OCI-LY7 (cell line): ENCODE measurements at regions of chr11 and their contacts with region 1.

Region 1: DNA sequence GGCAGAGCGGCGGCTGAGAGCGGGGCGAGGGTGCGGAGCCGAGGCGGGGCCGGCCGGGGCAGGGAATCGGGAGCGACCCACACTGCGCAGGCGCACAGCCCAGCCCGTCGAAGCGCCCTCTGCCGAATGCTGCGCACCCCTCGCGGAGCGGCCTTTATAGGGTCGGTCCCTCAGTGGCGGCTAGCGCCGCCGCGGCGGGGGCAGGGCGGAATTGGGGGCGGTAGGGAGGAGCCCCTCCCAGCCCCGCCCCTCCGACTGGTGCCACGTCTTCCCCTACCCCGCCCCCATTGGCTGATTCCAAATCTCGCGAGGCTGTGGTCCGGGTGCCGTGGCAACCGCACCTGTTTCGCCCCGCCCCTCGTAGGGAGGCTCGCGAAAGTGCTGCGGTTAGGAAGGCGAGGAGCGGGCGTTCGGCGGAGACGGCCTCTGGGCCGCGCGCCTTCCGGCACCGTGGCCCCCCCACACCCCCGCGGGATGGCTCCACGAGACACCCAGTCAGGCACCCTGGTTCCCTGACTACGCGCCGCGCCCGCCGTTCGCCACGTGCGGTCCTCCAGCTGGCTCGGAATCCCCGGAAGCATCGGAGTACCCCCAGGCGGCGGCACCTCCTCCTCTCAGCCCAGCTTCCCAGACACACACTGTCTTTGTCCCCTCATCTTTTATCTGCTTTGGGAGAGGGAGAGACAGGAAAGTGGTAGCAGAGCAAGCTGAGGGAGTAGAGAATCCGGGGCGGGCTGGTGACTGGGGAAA is at the start of gene EHD1:
- DNase-seq: peak; percentile 100
- H3K4me3 ChIP-seq: peak within 1 kb of the TSS; percentile 89
- H3K27ac ChIP-seq: peak within 1 kb of the TSS; percentile 97
- H3K4me1 ChIP-seq: peaks cover 76% of the 10 kb centered on the region
- CTCF ChIP-seq: peak; percentile 72
- total RNA-seq, gene EHD1: 101 and 107 TPM in 2 replicates

Region 2: GRCh38 chr11:64854534-64855429 is 23.9 kb before region 1 on chr11:
- CTCF ChIA-PET with region 1: interaction called, 7 read pairs
- POLR2A ChIA-PET with region 1: interaction called, 115 read pairs
- intact Hi-C with region 1: loop called (anchors 1 kb)
- DNase-seq: no peak
- H3K4me3 ChIP-seq: no peak overlapping the region
- H3K27ac ChIP-seq: peak overlapping the region; percentile 92
- H3K4me1 ChIP-seq: peaks cover 90% of the 10 kb centered on the region
- CTCF ChIP-seq: no peak

Region 3: DNA sequence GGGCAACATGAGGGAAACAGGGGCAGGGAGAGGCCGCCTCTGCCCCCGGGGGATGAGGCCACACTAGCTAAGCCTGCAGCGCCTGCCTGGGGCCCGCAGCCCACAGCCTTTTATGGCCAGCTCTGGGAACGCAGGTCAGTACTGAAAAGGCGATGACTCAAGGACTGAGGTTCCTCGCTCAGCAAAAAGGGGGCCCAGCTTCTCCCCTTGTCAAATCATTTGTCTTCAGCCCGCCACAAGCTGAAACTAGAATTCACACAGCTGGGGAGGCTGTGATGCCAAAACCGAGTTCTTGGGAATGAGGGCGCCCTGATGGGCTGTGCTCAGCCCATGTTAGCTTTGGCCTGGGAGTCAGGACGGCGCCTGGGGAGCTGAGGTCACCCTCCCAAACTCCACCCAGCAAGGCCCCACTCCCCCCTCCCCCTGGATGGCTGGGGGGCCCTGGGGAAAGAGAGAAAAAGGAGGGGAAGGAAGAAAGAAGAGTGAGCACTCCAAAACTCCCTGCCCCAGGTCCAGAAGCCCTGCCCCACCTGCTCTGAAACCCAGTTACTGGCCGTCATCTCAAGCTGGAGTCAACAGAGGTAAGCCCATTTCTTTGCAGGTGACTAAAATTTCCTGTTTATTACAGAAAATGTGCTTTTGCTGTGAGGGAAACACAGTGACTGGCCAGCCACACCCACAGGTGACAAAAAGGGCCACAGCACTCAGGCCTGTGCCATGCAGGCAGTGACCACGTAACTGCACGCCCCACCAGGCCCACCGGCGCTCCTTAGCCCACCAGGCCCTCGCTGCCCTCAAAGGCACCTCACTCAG is 14.0 kb before region 1 on chr11:
- CTCF ChIA-PET with region 1: interaction called, 7 read pairs
- POLR2A ChIA-PET with region 1: interaction called, 115 read pairs
- intact Hi-C with region 1: loop called (anchors 2 kb)
- DNase-seq: peak; percentile 75
- H3K4me3 ChIP-seq: peak overlapping the region; percentile 59
- H3K27ac ChIP-seq: peak overlapping the region; percentile 97
- H3K4me1 ChIP-seq: peaks cover 100% of the 10 kb centered on the region
- CTCF ChIP-seq: 0 out of 2 replicates have a peak, but pooled peaks have one; percentile 6

Region 4: GRCh38 chr11:65261591-65262380 is 383.1 kb after region 1 on chr11 and contains the start of gene POLA2:
- CTCF ChIA-PET with region 1: no interaction called
- POLR2A ChIA-PET with region 1: no interaction called
- intact Hi-C with region 1: no loop called
- DNase-seq: peak; percentile 98
- H3K4me3 ChIP-seq: peak within 1 kb of the TSS; percentile 78
- H3K27ac ChIP-seq: peak within 1 kb of the TSS; percentile 70
- H3K4me1 ChIP-seq: peaks cover 25% of the 10 kb centered on the region
- CTCF ChIP-seq: no peak
- total RNA-seq, gene POLA2: 47.5 and 50.0 TPM in 2 replicates